Aorta (tissue), 5 donors: ENCODE measurements at regions of chr4 and their contacts with region 1.

Region 1: DNA sequence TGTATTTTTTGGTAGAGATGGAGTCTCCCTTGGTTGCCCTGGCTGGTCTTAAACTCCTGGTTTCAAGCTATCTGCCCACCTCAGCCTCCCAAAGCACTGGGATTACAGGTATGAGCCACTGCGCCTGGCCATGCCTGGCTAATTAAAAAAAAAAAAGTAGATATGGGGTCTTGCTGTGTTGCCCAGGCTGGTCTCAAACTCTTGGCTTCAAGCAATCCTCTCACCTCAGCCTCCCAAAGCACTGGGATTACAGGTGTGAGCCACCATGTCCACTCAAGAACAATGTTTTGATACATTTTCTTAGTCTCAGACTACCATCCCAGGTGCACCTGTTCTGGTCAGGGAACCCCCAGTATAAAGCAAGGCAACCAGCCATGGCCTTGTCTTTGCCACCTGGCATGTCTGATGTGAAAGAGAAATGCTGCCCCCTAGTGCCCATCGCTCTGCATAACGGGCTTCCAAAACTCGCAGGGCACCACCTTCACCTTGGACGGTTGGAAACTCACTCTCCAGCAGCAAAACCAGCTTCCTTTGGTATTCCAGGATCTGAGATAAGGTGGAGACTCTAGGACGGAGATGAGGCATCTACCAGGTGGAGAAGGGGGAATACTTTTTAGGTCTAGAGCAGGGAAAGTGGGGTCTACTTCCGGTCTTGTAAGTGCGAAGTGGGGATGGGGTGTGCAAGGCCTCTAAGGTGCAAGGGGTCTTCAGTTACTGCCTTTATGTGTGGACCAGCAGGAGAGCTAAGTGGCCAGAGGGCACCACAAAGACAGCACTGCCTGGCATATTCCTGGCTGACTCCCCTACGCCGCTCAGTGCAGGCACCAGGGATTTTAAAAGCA is 47.7 kb upstream of the AFAP1 start:
- DNase-seq: peak in 1 of 2 donors; percentile 77
- ATAC-seq: peak; percentile 81
- H3K4me3 ChIP-seq: no peak overlapping the region
- H3K27ac ChIP-seq: no peak overlapping the region
- H3K4me1 ChIP-seq: no peaks in the 10 kb centered on the region
- H3K27me3 ChIP-seq: no peaks in the 10 kb centered on the region

Region 2: GRCh38 chr4:7761720-7762119 is 225.6 kb before region 1 on chr4:
- intact Hi-C with region 1: loop called (anchors 5 kb)
- DNase-seq: peak; percentile 86 to 92
- ATAC-seq: peak; percentile 86
- H3K4me3 ChIP-seq: no peak overlapping the region
- H3K27ac ChIP-seq: no peak overlapping the region
- H3K4me1 ChIP-seq: no peaks in the 10 kb centered on the region
- H3K27me3 ChIP-seq: no peaks in the 10 kb centered on the region

Region 3: DNA sequence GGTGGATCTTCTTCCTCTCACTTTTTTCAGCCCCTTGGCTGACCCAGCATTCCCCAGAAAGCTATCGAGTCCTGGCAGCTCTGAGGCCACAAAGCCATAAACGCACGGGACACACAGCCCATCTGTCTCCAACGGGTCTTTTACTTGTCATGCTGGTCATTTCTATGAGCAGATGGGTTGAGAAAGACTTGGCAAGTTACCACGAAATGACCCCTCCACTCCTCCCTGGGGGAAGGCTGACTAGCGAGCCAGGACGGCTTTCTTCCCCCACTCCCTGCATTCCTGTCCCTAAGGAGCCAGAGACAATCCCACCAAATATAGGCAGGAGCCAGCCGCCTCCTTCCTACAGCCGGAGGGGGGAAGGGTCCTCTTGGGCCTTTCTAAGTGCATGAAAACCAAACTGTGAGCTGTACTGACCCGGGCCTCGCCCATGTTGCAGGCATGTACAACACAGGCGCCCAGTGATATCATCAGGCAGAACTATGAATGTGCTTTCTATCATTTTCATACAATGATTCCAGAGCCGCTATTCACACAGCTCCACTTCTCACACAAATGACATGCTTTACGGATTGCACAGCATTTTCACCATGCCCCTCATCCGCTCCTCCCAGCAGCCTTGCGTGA is 76.3 kb before region 1 on chr4:
- intact Hi-C with region 1: no loop called
- DNase-seq: no peak
- ATAC-seq: peak; percentile 59
- H3K4me3 ChIP-seq: no peak overlapping the region
- H3K27ac ChIP-seq: peak overlapping the region in 1 of 2 donors; percentile 65
- H3K4me1 ChIP-seq: peaks cover 2 to 5% of the 10 kb centered on the region in 2 donors
- H3K27me3 ChIP-seq: no peaks in the 10 kb centered on the region